ENCODE measurements at regions of chr5 and their contacts with region 1.

Region 1: DNA sequence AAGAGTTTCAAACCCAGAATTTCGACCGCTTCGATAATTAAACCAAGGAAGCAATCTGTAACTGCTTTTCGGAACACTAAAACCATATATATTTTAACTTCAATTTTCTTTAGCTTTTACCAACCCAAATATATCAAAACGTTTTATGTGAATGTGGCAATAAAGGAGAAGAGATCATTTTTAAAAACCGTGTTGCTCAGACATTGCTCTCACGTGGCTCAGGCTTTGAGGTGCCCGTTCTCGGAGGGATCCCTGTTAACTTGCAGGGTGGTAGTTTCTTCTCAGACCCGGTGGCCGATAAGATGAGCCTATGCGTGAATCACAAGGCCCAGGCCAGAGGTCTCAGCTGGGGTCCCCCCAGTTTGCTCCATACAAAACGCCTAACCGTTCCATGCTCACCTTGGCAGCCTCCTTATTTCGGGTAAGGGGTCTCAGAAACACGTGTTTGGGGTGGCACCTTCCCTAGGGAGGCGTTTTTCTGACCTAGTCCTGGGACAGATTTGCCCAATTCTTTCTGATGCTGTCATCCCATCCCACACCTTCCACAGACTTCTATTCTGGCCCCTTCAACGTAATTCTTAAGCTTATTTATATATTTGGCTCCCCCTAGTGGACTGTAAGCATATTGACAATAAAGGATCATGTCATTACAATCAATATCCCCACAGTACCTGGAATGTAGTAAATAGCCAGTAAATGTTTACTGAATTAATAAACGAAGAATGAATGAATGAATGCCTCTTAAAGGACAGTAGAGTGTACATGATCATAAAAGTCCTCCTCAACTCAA is 48.1 kb downstream of the THBS4 start:
- DNase-seq: peak; percentile 81
- H3K4me3 ChIP-seq: no peak overlapping the region
- H3K27ac ChIP-seq: no peak overlapping the region
- H3K4me1 ChIP-seq: no peaks in the 10 kb centered on the region
- CTCF ChIP-seq: peak; percentile 86

Region 2: DNA sequence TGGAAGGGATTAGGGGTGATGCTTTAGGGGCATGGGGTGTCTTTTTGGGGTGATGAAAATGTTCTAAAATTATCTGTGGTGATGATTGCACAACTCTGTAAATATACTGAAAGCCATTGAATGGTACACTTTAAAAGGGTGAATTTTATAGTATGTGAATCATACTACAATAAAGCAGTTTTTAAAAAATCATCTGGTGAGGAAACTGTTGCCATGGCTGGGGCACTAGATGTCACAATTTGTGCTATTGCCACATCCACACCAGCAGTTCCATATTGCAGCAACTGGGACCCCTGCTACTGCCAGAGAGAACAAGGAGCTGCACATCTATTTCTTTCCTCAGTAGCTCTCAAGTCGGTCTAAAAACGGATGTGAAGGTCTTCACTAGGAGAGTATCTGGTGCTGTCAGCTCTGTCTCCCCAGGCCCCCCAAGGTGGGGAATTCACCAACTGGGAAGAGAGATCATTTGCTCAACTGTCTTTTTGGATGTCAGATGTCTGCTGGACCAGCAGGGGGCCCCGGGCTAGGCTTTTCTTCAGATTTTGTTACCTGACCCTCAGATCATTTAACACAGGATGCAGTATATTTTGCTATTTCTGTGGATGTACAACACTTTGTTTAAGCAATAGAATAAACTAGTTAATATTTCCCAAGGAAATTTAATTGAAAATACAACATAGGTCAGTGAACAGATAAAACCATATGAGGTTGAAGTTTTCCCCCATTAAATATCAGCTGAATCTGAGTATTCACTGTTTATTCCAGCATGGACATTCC is 380.5 kb before region 1 on chr5:
- CTCF ChIA-PET with region 1: interaction called, 3 read pairs
- POLR2A ChIA-PET with region 1: interaction called, 3 read pairs
- intact Hi-C with region 1: loop called (anchors 1 kb)
- DNase-seq: peak; percentile 29
- H3K4me3 ChIP-seq: no peak overlapping the region
- H3K27ac ChIP-seq: no peak overlapping the region
- H3K4me1 ChIP-seq: no peaks in the 10 kb centered on the region
- CTCF ChIP-seq: peak; percentile 85

Region 3: DNA sequence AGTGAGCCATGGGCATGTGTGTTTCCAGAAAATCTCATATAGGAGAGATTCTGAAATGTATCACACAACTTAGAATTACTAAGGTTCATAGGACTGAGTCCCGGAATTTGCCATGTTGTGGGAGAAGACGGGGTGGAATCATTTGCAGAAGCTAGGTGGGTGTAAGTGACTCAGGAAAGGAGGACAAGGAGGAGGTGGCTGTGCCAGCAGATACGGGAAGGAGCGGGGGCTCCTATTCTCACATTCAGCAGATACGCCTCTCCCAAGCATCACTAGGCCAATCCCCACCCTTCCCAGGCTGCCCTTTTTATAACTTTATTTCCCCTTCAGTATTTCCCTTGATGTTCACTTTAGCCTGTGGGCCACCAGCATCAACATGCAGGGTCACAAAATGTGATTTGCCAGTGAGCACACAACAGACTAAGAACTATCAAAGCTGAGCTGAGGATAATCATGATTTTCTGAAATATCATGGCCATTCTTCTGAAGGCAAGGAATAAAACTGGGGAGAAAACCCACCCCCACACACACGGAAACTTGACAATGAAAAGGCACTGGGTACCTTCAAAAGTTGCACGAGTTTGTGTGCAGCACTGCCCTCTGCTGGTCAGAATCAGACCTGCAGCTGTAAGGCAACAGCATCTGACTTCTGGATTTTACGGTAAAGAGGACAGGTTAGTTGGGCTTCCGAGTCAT is 225.4 kb before region 1 on chr5:
- CTCF ChIA-PET with region 1: no interaction called
- POLR2A ChIA-PET with region 1: interaction called, 5 read pairs
- intact Hi-C with region 1: loop called (anchors 1 kb)
- DNase-seq: peak; percentile 73
- H3K4me3 ChIP-seq: no peak overlapping the region
- H3K27ac ChIP-seq: no peak overlapping the region
- H3K4me1 ChIP-seq: no peaks in the 10 kb centered on the region
- CTCF ChIP-seq: peak; percentile 99

Region 4: GRCh38 chr5:79878721-79879336 is 204.5 kb before region 1 on chr5:
- CTCF ChIA-PET with region 1: no interaction called
- POLR2A ChIA-PET with region 1: interaction called, 4 read pairs
- intact Hi-C with region 1: loop called (anchors 1 kb)
- DNase-seq: peak; percentile 55
- H3K4me3 ChIP-seq: no peak overlapping the region
- H3K27ac ChIP-seq: no peak overlapping the region
- H3K4me1 ChIP-seq: peaks cover 27% of the 10 kb centered on the region
- CTCF ChIP-seq: peak; percentile 87

Region 5: DNA sequence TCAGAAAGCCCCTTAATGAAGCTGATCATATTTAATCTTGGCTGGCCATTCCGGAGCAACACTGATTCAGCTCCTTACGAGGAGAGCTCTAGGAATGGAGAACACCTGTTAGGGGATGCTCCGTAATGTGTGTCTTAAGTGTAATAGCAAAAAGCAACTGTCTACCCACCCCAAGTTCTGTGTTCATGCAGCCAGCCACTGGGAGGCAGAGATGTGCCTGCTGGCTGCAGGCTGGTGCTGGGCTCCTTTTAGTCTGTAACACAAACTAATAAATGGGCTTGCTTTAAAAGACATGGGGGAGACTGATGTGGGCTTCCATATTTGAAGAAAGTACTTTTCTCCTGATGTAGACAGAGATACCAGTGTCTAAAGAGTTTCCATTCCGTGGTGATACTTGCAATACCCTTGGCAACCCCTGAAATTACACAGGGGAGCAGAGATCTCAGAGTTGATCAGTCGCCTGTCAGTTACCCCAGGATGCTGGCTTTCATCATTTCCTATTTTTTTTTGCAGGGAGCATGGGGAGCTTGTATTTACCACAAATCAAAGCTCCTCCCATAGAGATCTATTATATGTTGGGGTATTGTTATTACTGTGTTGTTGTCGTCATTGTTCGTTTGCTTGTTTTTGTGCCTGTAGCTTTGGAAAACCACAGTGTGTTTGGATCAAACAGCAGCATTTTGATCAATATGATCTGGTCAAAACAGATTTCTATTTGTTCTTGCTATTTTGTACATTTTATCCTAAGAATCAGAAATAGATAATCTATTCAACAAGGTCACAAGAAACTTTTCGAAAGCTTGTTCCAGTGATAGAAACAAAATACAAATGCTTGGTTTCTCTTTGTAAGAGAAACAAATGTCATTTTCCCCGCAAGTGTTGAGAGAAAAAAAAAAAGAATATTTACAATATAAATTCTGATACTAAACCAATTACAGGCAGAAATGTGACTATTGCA is 158.1 kb before region 1 on chr5:
- CTCF ChIA-PET with region 1: no interaction called
- POLR2A ChIA-PET with region 1: interaction called, 3 read pairs
- intact Hi-C with region 1: loop called (anchors 1 kb)
- DNase-seq: peak; percentile 54
- H3K4me3 ChIP-seq: no peak overlapping the region
- H3K27ac ChIP-seq: no peak overlapping the region
- H3K4me1 ChIP-seq: no peaks in the 10 kb centered on the region
- CTCF ChIP-seq: peak; percentile 74